ENCODE measurements at regions of chr1 and their contacts with region 1.

Region 1: GRCh38 chr1:224542783-224543440 is 73.2 kb upstream of the CNIH3 start:
- DNase-seq: peak; percentile 99
- ATAC-seq: peak; percentile 94
- H3K4me3 ChIP-seq: peak overlapping the region; percentile 28
- H3K27ac ChIP-seq: peak overlapping the region; percentile 88
- H3K4me1 ChIP-seq: peaks cover 38% of the 10 kb centered on the region
- H3K27me3 ChIP-seq: no peaks in the 10 kb centered on the region
- CTCF ChIP-seq: no peak

Region 2: GRCh38 chr1:224497714-224498573 is 45.0 kb before region 1 on chr1:
- CTCF ChIA-PET with region 1: no interaction called
- POLR2A ChIA-PET with region 1: interaction called, 4 read pairs
- intact Hi-C with region 1: loop called (anchors 1 kb)
- DNase-seq: peak; percentile 91
- ATAC-seq: peak; percentile 78
- H3K4me3 ChIP-seq: peak overlapping the region; percentile 48; the same call in 1 of the 2 replicates
- H3K27ac ChIP-seq: peak overlapping the region; percentile 89
- H3K4me1 ChIP-seq: peaks cover 46% of the 10 kb centered on the region
- H3K27me3 ChIP-seq: no peaks in the 10 kb centered on the region
- CTCF ChIP-seq: no peak

Region 3: GRCh38 chr1:224513787-224514209 is 29.1 kb before region 1 on chr1:
- CTCF ChIA-PET with region 1: no interaction called
- POLR2A ChIA-PET with region 1: no interaction called
- intact Hi-C with region 1: loop called (anchors 2 kb)
- DNase-seq: peak; percentile 97
- ATAC-seq: peak; percentile 95
- H3K4me3 ChIP-seq: no peak overlapping the region
- H3K27ac ChIP-seq: no peak overlapping the region
- H3K4me1 ChIP-seq: peaks cover 25% of the 10 kb centered on the region
- H3K27me3 ChIP-seq: no peaks in the 10 kb centered on the region
- CTCF ChIP-seq: peak; percentile 98